GM18951 (cell line): ENCODE measurements at regions of chr5 and their contacts with region 1.

Region 1: DNA sequence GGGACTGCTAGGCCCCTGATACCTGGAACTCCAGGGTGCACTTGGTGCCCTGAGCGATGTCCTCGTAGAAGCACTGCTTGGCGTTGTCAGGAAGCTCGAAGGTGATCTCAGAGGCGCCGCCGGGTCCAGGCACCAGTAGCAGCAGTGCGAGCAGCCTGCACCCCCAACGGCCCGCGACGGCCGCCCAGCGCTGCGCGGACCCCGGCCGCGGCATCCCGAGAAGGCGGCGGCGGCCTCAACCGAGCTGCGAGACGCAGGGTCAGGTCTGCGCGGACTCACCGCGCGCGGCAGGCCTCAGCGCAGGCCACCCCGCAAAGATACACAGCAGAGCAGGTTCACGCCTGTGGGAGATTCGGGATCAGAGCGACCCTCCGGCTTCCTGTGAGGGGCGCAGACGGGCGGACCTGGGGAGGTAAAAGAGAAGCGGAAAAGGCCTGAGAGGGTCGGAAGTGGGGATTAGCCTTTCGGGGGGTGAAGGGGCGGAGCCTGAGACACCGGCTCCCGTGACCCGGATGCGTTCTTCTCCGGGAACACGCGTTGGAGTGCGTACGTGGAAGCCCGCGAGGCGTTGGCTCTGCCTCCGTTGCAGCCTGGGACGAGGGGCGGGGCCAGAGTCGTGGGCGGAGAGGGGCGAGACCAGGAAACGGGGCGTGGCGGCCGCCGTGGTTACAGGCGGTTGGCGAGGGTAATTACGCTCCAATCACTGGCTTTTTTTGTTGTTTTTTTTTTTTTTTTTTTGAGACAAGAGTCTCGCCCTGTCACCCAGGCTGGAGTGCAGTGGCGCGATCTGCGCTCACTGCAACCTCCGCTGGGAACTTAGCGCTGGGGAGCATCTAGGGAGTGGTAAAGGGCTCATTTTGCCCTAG is at the start of gene TMED7:
- POLR2A ChIP-seq: peak; percentile 81

Region 2: DNA sequence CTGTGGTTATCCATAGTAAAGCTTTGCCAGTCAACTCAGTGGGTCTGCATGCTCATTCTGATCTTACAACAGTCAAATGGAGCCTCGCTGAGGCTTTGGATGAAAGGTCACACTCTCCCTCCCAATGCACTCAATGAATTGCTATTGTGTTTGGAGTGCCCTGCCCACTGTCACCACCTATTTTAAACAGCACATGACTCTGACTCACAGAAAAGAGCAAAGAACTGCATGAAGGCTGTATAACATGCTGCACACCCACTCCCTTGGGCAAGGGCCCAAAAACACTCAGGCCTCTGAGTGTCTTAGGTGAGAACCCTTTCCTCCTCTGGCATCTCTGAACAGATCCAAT is 210.7 kb before region 1 on chr5:
- in situ Hi-C with region 1: no loop called
- POLR2A ChIP-seq: no peak

Region 3: DNA sequence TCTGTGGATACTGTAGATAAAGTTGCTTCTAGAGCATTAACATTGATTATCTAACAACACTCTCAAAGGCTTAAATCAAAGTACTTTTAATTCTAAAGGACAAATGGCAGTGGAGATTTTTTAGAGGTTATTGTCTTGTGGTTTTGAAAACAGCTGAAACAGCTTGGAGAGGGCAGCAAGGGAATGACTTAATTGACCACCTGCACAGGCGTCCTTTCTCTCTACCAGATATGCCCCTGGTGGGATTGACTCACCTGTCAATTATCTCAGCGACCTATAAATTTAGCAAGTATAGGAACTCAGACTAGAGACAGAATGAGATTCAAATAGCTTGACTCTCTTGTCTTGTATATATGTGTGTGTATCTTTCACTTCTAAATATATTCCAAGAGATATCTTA is 420.0 kb after region 1 on chr5:
- in situ Hi-C with region 1: loop called (anchors 10 kb)
- POLR2A ChIP-seq: no peak